HEK293 (cell line): ENCODE measurements at regions of chr7 and their contacts with region 1.

Region 1: DNA sequence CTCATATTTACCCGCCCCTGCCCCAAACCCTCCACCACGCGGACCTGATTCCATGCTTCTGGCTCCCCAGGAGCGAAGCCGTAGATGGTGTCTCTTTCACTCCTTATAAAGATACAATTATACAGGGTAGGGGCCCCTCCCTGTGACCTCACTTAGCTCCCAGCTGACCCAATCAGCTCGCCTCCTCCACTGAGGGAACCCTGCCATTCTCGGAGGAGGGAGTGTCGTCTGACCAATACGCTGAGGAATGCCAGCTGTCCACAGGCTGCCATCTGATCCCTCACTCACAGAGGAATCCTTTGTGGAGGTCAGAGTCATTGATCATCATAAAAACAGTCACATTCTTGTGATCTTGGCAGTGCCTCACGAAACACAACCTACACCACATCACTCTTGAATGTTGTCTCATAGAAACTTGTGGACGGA is 67.5 kb upstream of the INSIG1 start:
- H3K4me3 ChIP-seq: no peak overlapping the region
- H3K27ac ChIP-seq: no peak overlapping the region
- H3K4me1 ChIP-seq: no peaks in the 10 kb centered on the region
- CTCF ChIP-seq: no peak

Region 2: GRCh38 chr7:155108144-155108901 is 121.9 kb before region 1 on chr7:
- CTCF ChIA-PET with region 1: no interaction called
- POLR2A ChIA-PET with region 1: no interaction called
- H3K4me3 ChIP-seq: no peak overlapping the region
- H3K27ac ChIP-seq: no peak overlapping the region
- H3K4me1 ChIP-seq: no peaks in the 10 kb centered on the region
- CTCF ChIP-seq: no peak

Region 3: GRCh38 chr7:155205368-155206317 is 24.5 kb before region 1 on chr7:
- CTCF ChIA-PET with region 1: interaction called, 6 read pairs
- POLR2A ChIA-PET with region 1: interaction called, 19 read pairs
- H3K4me3 ChIP-seq: peak overlapping the region; percentile 38
- H3K27ac ChIP-seq: peak overlapping the region; percentile 61
- H3K4me1 ChIP-seq: no peaks in the 10 kb centered on the region
- CTCF ChIP-seq: no peak